ENCODE measurements at regions of chr6 and their contacts with region 1.

Region 1: DNA sequence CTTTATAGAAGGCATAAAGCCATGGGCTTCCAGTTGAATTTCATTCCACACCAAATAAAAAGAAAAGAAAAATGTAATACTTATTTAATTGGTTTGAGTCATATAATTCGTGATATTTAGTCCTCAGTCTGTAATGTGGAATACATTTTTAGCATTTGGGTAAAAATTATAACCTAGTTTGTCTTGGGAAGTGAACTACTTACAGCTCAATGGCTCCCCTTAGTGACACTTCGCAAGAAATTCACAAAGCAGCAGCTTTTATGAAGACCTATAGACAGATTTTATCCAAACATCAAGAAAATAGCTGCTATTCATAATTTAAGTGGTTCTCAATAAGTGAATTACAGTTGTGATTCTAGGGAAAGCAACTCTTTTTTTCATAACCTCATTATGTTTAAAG is 72.1 kb downstream of the RSPO3 start:
- DNase-seq: no peak
- H3K4me3 ChIP-seq: no peak overlapping the region
- H3K27ac ChIP-seq: no peak overlapping the region
- H3K4me1 ChIP-seq: no peaks in the 10 kb centered on the region
- H3K27me3 ChIP-seq: no peaks in the 10 kb centered on the region
- CTCF ChIP-seq: peak; percentile 81

Region 2: GRCh38 chr6:127032971-127033370 is 157.6 kb before region 1 on chr6:
- CTCF ChIA-PET with region 1: interaction called, 10 read pairs
- POLR2A ChIA-PET with region 1: no interaction called
- intact Hi-C with region 1: no loop called
- DNase-seq: no peak
- H3K4me3 ChIP-seq: no peak overlapping the region
- H3K27ac ChIP-seq: no peak overlapping the region
- H3K4me1 ChIP-seq: no peaks in the 10 kb centered on the region
- H3K27me3 ChIP-seq: no peaks in the 10 kb centered on the region
- CTCF ChIP-seq: no peak

Region 3: DNA sequence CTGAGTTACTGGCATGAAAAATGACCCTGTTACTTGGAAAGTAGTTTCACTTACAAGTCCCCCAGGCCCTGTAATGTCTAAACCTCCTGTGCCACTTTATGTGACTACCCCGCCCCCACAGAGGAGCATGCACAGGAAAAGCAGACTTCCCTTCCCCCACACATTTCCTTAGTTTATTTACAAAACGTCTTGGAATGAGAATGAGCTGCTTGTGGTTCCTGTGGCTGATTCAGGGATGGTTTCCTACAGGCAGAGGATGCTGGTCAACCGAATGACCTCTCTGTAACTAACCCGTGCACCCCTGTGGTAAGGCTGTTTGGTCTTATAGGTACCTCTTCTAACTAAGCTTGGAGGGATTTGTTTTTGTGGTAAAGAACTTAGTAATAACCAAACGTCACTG is 43.6 kb before region 1 on chr6:
- CTCF ChIA-PET with region 1: no interaction called
- POLR2A ChIA-PET with region 1: no interaction called
- intact Hi-C with region 1: no loop called
- DNase-seq: peak; percentile 1 to 27
- H3K4me3 ChIP-seq: no peak overlapping the region
- H3K27ac ChIP-seq: no peak overlapping the region
- H3K4me1 ChIP-seq: peaks cover 7% of the 10 kb centered on the region; the same call in 1 of the 2 replicates
- H3K27me3 ChIP-seq: no peaks in the 10 kb centered on the region
- CTCF ChIP-seq: no peak

Measured in PC-9 (cell line).